K562 (cell line): ENCODE measurements at regions of chr10 and their contacts with region 1.

Region 1: DNA sequence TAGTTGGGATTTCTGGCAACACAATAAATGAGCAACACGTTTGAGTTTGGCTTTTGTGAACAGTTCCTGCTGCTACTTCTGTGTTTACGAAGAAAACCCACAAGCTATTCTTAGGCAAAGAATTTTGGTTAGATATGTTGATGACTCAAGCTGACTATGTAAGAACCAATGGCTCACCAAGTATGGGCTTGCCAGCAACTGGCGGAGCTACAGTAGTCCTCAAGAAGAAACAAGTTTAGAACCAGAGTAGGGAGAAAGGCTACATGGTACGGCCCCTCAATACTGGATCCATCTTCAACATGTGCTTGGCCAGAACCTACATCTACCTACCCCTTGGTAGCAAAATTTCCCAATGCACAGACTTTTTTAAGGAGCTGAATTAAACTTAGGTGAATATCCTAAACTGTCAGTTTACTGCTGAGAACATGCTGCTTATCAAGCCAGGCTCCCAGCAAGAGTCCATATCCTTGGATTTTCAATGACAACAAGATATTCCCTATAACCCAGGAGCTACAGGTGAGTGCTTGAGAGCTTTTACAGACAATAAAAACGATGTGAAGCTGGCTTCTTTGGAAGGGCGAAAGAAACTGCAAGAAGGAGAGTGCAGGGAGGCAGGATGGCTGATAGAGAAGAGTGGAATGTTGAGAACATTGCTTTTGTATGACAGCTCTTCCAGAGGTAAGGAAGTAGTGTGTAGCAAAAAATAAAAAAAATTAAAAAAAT is 74.3 kb upstream of the ASAH2 start:
- DNase-seq: peak in 3 of 4 experiments; percentile 39 to 92 (median 74)
- ATAC-seq: peak; percentile 58
- H3K4me3 ChIP-seq: peak overlapping the region; percentile 32
- H3K27ac ChIP-seq: peak overlapping the region; percentile 97
- H3K4me1 ChIP-seq: peaks cover 19 to 80% of the 10 kb centered on the region in 2 experiments
- H3K27me3 ChIP-seq: no peaks in the 10 kb centered on the region
- CTCF ChIP-seq: no peak
- EP300 ChIP-seq: peak; percentile 88; the same call in 1 of the 2 replicates
- POLR2A ChIP-seq: no peak
- RAD21 ChIP-seq: no peak

Region 2: GRCh38 chr10:49187950-49188761 is 1137.5 kb before region 1 on chr10 and contains the start of gene TMEM273:
- CTCF ChIA-PET with region 1: no interaction called
- POLR2A ChIA-PET with region 1: no interaction called
- in situ Hi-C with region 1: no loop called
- intact Hi-C with region 1: loop called (anchors 10 kb)
- DNase-seq: peak; percentile 53 to 86 (median 63)
- ATAC-seq: peak; percentile 50
- H3K4me3 ChIP-seq: peak within 1 kb of the TSS; percentile 32
- H3K27ac ChIP-seq: peak within 1 kb of the TSS; percentile 57
- H3K4me1 ChIP-seq: peaks cover 42 to 45% of the 10 kb centered on the region in 2 experiments
- H3K27me3 ChIP-seq: no peaks in the 10 kb centered on the region
- CTCF ChIP-seq: no peak
- EP300 ChIP-seq: no peak
- POLR2A ChIP-seq: peak; percentile 71
- RAD21 ChIP-seq: no peak
- polyA plus RNA-seq, gene TMEM273: 97.3 to 102 TPM

Region 3: GRCh38 chr10:50291261-50291850 is 34.3 kb before region 1 on chr10:
- CTCF ChIA-PET with region 1: no interaction called
- POLR2A ChIA-PET with region 1: no interaction called
- in situ Hi-C with region 1: no loop called
- intact Hi-C with region 1: loop called (anchors 5 kb)
- DNase-seq: peak; percentile 42 to 68 (median 60)
- ATAC-seq: peak; percentile 88
- H3K4me3 ChIP-seq: no peak overlapping the region
- H3K27ac ChIP-seq: no peak overlapping the region
- H3K4me1 ChIP-seq: peaks cover 9 to 16% of the 10 kb centered on the region in 2 experiments; a peak in 3 of 5 replicates
- H3K27me3 ChIP-seq: no peaks in the 10 kb centered on the region
- CTCF ChIP-seq: peak; percentile 74 to 89 (median 76)
- EP300 ChIP-seq: no peak
- POLR2A ChIP-seq: no peak
- RAD21 ChIP-seq: peak; percentile 91 to 97

Region 4: GRCh38 chr10:50310560-50311174 is 14.9 kb before region 1 on chr10:
- CTCF ChIA-PET with region 1: no interaction called
- POLR2A ChIA-PET with region 1: interaction called, 59 read pairs
- in situ Hi-C with region 1: no loop called
- intact Hi-C with region 1: loop called (anchors 1 kb)
- DNase-seq: peak; percentile 73 to 88 (median 75)
- ATAC-seq: peak; percentile 84
- H3K4me3 ChIP-seq: no peak overlapping the region
- H3K27ac ChIP-seq: peak overlapping the region; percentile 37; the same call in 2 of the 3 replicates
- H3K4me1 ChIP-seq: peaks cover 7 to 49% of the 10 kb centered on the region in 2 experiments
- H3K27me3 ChIP-seq: no peaks in the 10 kb centered on the region
- CTCF ChIP-seq: peak; percentile 78 to 93 (median 78)
- EP300 ChIP-seq: no peak
- POLR2A ChIP-seq: no peak; the same call in 1 of the 2 replicates
- RAD21 ChIP-seq: peak; percentile 39 to 75; a peak in 3 of 4 replicates

Region 5: DNA sequence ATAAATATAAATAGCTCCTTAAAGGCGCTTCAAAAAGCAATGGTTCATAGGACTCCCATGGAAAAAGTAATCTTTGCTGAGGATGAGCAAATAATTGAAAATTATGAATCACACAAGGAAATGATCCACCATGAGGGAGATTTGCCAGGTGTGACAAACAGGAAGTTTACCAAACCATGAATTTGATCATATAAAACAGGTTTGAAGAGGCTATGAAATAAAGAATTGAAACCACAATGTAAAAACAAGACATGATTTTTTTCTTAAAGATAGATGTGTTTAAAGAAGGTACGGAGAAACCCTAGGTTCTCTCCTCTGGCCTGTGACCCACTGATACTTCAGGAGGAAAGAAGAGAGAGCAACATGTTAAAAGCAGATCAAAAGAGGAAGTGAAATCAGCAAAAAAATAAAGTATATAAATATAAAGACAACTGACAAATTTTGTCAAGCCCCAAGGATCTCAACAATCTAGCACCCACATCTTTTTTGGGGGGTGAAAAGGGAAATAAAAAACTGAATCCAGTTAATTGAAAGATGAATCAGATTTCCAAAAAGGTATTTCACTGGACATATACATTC is 37.0 kb after region 1 on chr10:
- CTCF ChIA-PET with region 1: no interaction called
- POLR2A ChIA-PET with region 1: interaction called, 9 read pairs
- in situ Hi-C with region 1: no loop called
- intact Hi-C with region 1: loop called (anchors 2 kb)
- DNase-seq: no peak
- ATAC-seq: no peak
- H3K4me3 ChIP-seq: no peak overlapping the region
- H3K27ac ChIP-seq: peak overlapping the region; percentile 36; the same call in 2 of the 3 replicates
- H3K4me1 ChIP-seq: peaks cover 10 to 56% of the 10 kb centered on the region in 2 experiments
- H3K27me3 ChIP-seq: no peaks in the 10 kb centered on the region
- CTCF ChIP-seq: no peak
- EP300 ChIP-seq: no peak
- POLR2A ChIP-seq: no peak
- RAD21 ChIP-seq: no peak

Region 6: DNA sequence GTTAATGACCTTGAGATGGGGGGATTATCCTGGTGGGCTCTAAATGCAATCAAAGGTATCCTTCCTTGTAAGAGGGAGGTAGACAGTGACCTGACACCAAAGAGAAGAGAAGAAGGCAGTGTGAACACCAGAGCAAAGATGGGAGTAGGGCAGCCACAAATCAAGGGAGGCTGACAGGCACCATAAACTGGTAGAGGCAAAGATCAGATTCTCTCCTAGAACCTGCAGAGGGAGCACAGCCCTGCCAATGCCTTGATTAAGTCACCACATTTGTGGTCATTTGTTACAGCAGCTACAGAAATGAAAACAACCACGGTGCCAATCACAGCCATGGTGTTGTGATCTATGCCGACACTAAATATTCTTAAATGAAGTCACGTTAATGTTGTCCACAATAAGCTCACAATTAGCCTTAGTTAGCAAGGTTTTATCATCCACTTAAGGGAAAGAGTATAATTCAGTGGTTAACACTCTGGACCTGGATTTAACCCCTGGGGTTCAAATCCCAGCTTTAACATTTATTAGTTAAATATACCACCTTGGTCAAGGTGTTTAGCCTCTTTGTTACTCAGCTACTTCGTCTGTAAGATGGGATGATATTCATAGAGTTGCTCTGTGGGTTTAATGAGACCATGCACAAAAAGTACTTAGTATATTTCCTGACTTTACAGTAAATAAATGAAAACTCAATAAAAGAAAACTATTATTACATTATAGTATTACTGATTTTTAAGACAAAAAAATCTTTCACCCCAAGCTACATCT is 227.3 kb after region 1 on chr10:
- CTCF ChIA-PET with region 1: no interaction called
- POLR2A ChIA-PET with region 1: no interaction called
- in situ Hi-C with region 1: no loop called
- intact Hi-C with region 1: loop called (anchors 2 kb)
- DNase-seq: peak in 2 of 4 experiments; percentile 41 to 77
- ATAC-seq: peak; percentile 43
- H3K4me3 ChIP-seq: no peak overlapping the region; the same call in 1 of the 2 replicates
- H3K27ac ChIP-seq: peak overlapping the region; percentile 23; the same call in 1 of the 3 replicates
- H3K4me1 ChIP-seq: peaks cover 34 to 63% of the 10 kb centered on the region in 2 experiments
- H3K27me3 ChIP-seq: no peaks in the 10 kb centered on the region
- CTCF ChIP-seq: peak; percentile 57 to 66 (median 60)
- EP300 ChIP-seq: peak; percentile 39; the same call in 1 of the 2 replicates
- POLR2A ChIP-seq: no peak
- RAD21 ChIP-seq: peak; percentile 57 to 68; a peak in 3 of 4 replicates